ENCODE measurements at regions of chr11 and their contacts with region 1.

Region 1: DNA sequence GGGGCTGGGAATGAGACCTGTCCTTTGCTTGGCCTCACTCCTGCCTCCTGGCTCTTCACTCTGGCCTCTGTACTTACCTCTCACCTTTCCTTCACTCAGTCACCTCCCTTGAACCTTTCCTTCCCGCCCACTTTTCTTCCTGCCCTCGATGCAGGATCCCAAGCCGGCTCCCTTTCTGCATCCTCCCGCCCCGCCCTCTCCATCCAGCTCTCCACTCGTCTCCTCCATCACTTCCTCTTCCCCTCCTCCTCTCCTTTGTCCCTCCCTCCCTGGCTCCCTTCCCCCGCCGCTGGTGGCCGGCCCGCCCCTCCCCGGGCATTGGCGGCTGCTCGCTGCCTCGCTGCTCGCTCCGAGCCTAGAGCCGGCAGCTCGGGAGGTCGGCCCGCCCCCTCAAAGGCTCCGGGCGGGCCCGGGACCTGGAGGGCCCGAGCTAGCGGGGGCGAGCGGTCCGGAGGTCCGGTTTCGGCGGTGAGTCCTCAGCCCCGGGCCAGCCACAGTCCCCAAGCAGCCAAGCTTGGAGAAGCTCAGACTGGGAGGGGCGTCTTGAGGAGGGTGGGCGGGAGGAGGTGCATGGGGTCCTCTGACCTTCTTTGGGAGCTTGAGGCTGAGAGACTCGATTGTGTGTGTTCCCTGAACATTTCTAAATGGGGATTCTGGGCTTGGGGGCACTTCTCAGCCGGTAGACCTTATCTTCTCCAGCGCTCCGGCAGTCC is 13.8 kb downstream of the PHLDB1 start:
- DNase-seq: peak; percentile 93
- H3K4me3 ChIP-seq: peak overlapping the region; percentile 59 to 74 (median 70)
- H3K27ac ChIP-seq: peak overlapping the region; percentile 96
- H3K4me1 ChIP-seq: peaks cover 63% of the 10 kb centered on the region
- H3K27me3 ChIP-seq: no peaks in the 10 kb centered on the region
- CTCF ChIP-seq: no peak
- POLR2A ChIP-seq: peak; percentile 61

Region 2: DNA sequence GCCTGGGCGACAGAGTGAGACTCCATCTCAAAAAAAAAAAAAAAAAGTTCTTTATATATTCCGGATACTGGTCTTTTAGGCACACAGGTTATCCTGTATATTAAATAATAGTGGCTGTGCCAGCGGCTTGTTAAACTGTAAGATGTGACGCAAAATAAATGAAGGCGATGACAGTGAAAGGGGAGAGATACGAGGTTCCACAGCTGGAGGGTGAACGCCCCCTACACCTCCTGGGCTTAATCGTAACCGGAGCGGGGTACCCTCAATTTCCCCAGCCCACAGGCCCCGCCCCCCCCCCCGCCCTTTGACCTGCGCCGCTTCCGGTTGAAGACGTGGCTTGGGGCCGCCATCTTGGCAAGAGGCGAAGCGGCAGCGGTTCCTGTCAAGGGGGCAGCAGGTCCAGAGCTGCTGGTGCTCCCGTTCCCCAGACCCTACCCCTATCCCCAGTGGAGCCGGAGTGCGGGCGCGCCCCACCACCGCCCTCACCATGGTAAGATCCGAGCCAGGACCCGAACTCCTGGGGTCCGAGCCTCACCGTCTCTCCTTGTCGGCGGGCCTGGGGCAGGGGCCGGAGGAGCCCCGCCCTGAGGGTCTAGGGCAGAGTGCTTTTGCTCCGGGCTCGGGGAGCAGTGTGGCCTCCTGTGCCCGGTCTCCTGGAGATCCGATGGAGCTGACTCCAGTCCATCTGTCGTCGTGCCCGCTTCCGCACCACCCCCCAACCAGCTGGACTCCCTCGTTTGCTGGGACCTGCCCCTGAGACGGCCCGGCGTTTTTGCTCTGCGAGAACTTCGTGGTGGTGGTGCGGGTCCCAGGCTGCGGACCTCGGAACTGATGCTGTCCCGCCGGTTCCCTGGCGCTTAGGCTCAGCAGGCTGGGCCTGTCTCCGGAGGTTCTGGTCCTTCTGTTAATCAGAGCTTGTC is 48.9 kb before region 1 on chr11 and contains the start of gene ARCN1:
- CTCF ChIA-PET with region 1: no interaction called
- POLR2A ChIA-PET with region 1: no interaction called
- dilution Hi-C with region 1: no loop called
- intact Hi-C with region 1: no loop called
- DNase-seq: peak; percentile 74
- H3K4me3 ChIP-seq: peak within 1 kb of the TSS; percentile 59 to 99 (median 90)
- H3K27ac ChIP-seq: peak within 1 kb of the TSS; percentile 87
- H3K4me1 ChIP-seq: peaks cover 19% of the 10 kb centered on the region
- H3K27me3 ChIP-seq: no peaks in the 10 kb centered on the region
- CTCF ChIP-seq: no peak
- POLR2A ChIP-seq: peak; percentile 92
- total RNA-seq, gene ARCN1: 168 and 172 TPM in 2 replicates

Region 3: DNA sequence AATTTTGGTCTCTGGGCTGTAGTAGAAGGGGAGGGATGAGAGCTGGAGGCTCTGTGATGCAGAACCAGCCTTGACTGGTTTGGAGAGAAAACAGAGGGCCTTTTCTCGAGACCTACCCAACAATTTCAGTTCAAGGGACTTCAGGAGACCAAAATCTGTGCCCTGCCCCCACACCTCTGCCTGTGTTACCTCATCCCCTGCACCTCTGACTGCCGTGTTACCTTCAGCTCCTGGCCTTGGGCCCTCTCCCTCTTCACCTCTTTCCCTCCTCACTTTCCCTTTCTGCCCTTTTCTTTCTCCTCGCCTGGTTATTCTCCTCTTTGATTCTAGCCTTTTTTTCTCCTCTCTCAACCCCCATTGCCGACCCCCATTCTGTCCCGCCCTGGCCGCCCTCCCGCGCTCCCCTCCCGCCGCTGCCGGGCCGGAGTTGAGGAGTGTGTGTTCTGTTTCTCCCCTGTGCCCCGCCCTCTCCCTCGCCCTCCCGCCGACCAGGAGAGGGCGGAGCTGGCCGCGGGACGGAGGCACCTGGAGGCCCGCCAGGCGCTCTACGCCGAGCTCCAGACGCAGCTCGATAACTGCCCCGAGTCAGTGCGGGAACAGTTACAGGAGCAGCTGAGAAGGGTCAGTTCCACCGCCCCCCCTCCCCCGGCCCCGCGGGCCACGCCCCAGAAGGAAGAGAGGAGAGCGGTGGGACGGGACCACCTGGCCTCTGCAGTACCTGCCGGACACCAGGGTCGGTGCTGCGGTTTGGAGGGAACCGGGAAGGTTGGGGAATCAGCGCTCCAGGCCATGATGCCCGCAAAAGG is 13.4 kb after region 1 on chr11:
- CTCF ChIA-PET with region 1: interaction called, 11 read pairs
- POLR2A ChIA-PET with region 1: interaction called, 11 read pairs
- dilution Hi-C with region 1: no loop called
- intact Hi-C with region 1: no loop called
- DNase-seq: no peak
- H3K4me3 ChIP-seq: no peak overlapping the region
- H3K27ac ChIP-seq: no peak overlapping the region
- H3K4me1 ChIP-seq: no peaks in the 10 kb centered on the region
- H3K27me3 ChIP-seq: no peaks in the 10 kb centered on the region
- CTCF ChIP-seq: no peak
- POLR2A ChIP-seq: no peak

Region 4: GRCh38 chr11:118659314-118659952 is 38.2 kb after region 1 on chr11:
- CTCF ChIA-PET with region 1: interaction called, 10 read pairs
- POLR2A ChIA-PET with region 1: no interaction called
- dilution Hi-C with region 1: no loop called
- intact Hi-C with region 1: no loop called
- DNase-seq: peak; percentile 86
- H3K4me3 ChIP-seq: no peak overlapping the region
- H3K27ac ChIP-seq: peak overlapping the region; percentile 18
- H3K4me1 ChIP-seq: peaks cover 6% of the 10 kb centered on the region
- H3K27me3 ChIP-seq: peaks cover 0 to 2% of the 10 kb centered on the region in 2 experiments
- CTCF ChIP-seq: peak; percentile 97 to 98
- POLR2A ChIP-seq: peak; percentile 65